ENCODE measurements at regions of chr10 and their contacts with region 1.

Region 1: GRCh38 chr10:132654702-132655661 is 117.4 kb downstream of the INPP5A start:
- DNase-seq: peak; percentile 72 to 84 (median 78)
- H3K4me3 ChIP-seq: peak overlapping the region in 1 of 59 donors; percentile 24
- H3K27ac ChIP-seq: peak overlapping the region in 53 of 59 donors; percentile 3 to 100 (median 66)
- H3K27me3 ChIP-seq: no peaks in the 10 kb centered on the region
- CTCF ChIP-seq: peak; percentile 77 to 99 (median 96)

Region 2: DNA sequence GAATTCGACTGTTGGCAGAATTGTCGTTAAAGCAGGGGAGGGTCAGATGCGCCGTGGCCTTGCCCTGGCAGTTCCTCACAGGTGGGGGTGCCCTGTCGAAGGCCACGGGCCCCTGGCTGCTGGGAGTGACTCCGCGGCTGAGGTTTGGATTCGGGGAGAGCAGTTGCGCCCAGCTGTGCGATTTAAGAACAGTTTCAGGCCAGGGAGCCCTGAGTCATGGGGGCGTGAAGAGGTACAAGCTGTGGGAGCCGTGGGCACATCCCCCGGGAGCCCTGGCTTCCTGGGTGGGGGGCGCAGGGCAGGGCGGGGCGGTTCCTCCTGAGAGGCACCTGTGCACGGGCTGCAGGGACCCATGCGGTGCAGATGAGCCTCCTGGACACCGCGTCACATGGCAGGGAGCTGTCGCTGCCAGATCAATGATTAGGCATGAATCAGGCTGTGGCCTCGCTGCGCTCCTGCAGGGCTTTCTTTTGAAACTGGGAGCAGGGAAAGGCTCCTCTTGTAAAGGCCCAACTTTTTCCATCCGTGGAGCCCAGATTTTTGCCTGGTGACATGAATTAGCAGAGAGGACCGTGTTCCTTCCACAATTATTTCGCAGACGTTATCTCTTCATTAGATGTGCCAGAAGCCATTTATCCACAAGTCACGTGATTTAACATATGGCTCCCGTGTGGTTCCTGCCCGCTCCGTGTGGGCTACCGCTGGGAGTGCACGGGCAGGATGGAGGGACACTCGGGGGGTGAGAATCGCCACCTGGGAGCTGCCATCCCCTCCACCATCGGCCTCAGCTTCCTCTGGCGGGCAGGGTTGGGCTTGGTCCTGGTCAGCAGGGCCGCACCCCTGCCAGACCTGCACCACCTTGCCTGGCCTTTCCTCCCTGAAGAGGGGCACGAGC is 257.1 kb before region 1 on chr10:
- intact Hi-C with region 1: no loop called
- DNase-seq: peak in 1 of 10 donors; percentile 51
- H3K4me3 ChIP-seq: peak overlapping the region; percentile 61 to 85 (median 72)
- H3K27ac ChIP-seq: peak overlapping the region in 57 of 59 donors; percentile 19 to 93 (median 71)
- H3K27me3 ChIP-seq: no peaks in the 10 kb centered on the region
- CTCF ChIP-seq: peak in 1 of 56 donors; percentile 9

Region 3: DNA sequence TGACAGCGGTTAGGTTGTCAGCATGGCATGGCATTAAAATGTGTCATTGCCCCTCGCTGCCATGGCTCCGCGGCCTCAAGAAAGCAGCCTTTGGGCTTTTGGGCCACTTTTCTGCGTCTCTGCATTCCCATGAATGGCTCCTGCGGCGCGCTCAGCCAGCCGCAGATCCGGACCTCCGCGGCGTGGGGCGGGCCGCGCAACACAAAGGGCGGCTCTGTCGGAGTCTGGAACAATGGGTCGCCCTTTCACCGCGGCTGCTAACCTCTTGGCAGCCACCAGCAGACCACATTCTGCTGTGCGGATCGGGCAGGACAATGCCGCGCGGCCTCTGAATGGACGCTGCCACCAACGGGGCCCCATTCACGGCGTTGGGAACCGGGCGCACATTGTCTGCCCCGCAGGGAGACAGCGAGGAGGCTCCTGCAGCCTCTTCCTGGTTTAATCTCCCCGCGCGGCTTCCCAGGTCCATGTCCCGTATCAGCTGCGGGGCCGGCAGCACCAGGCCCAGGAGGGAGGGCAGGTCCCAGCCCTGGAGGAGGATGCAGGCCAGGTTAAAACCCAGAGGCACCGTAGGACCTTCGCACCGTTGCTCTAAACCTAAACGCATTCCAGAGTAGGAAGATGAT is 59.2 kb after region 1 on chr10:
- intact Hi-C with region 1: loop called in 1 of 2 experiments (anchors 2 kb)
- DNase-seq: peak; percentile 41 to 93 (median 92)
- H3K4me3 ChIP-seq: peak overlapping the region in 40 of 59 donors; percentile 0 to 47 (median 28)
- H3K27ac ChIP-seq: peak overlapping the region; percentile 79 to 100 (median 96)
- H3K27me3 ChIP-seq: no peaks in the 10 kb centered on the region
- CTCF ChIP-seq: peak in 17 of 56 donors; percentile 8 to 35 (median 20)

Region 4: DNA sequence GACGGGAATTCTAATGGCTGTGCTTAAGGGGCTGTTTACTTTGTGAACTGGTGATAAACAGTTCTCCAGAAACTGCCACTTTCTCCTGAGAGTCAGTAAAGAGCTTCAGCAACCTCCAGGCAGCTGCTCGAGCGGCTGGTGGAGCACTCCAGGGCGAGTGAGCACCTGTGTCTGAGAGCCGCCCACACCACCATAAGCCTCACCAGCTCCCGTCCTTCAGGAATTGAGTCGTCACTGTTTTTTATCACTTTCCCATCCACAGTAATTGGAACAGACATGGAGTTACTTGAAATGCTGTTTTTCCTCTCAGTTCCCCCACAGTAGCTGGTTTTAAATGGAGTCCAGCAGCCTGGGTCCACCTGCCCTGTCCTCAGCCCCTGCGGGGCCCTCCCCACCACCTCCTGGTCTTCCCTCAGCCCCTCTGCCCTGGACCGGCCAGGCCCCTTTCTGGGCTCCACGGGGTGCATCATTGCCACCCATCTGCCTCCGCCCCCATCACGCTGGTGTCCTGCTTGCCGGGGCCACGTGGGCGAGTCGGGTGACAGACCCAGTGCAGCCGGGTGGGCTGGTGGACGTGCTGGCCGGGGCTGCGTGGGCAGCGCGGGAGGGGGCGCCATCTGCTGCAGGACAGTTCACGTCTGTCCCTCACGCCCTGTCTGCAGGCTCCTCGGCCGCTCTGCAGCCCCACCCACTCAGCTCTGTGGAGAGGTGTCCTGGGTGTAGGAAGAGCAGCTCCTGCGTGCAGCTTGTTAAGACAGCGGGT is 75.0 kb after region 1 on chr10:
- intact Hi-C with region 1: loop called (anchors 5 kb)
- DNase-seq: peak in 2 of 10 donors; percentile 32 to 72
- H3K4me3 ChIP-seq: peak overlapping the region in 1 of 59 donors; percentile 5
- H3K27ac ChIP-seq: peak overlapping the region in 2 of 59 donors; percentile 38 to 39
- H3K27me3 ChIP-seq: no peaks in the 10 kb centered on the region
- CTCF ChIP-seq: no peak

Region 5: DNA sequence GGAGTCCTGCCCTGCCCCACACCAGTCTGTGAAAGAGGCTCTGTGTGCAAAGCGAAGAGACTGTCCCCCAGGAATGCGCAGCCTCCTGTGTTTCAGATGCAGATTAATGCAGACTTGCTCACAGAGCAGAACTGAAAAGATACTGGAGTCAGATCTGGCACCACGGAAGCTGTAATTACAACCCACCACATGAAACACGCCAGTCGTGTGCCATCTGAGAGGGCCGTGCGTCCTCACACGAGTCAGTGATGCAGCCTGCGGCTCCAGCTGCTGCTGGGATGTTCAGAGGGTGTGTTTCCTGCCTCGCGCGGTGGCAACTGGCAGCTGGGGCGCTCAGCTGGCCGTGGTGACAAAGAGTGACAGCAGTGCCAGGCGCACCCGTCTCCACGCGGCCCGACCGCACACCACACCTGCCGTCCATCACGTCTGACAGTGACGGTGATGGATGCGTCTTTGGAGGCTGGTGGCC is 81.0 kb after region 1 on chr10:
- intact Hi-C with region 1: loop called in 1 of 2 experiments (anchors 2 kb)
- DNase-seq: peak; percentile 14 to 93 (median 90)
- H3K4me3 ChIP-seq: peak overlapping the region in 22 of 59 donors; percentile 8 to 50 (median 29)
- H3K27ac ChIP-seq: peak overlapping the region; percentile 81 to 100 (median 99)
- H3K27me3 ChIP-seq: no peaks in the 10 kb centered on the region
- CTCF ChIP-seq: peak in 1 of 56 donors; percentile 6

Region 6: GRCh38 chr10:132788180-132788830 is 133.3 kb after region 1 on chr10:
- intact Hi-C with region 1: loop called (anchors 2 kb)
- DNase-seq: peak in 6 of 10 donors; percentile 52 to 79 (median 59)
- H3K4me3 ChIP-seq: peak overlapping the region in 58 of 59 donors; percentile 7 to 70 (median 53)
- H3K27ac ChIP-seq: peak overlapping the region in 50 of 59 donors; percentile 22 to 92 (median 84)
- H3K27me3 ChIP-seq: peaks cover 0 to 61% (median 46%) of the 10 kb centered on the region in 45 donors
- CTCF ChIP-seq: peak in 54 of 56 donors; percentile 13 to 75 (median 48)

Region 7: GRCh38 chr10:132836832-132837540 is 182.0 kb after region 1 on chr10:
- intact Hi-C with region 1: loop called (anchors 5 kb)
- DNase-seq: peak in 6 of 10 donors; percentile 35 to 75 (median 62)
- H3K4me3 ChIP-seq: peak overlapping the region in 30 of 59 donors; percentile 0 to 49 (median 29)
- H3K27ac ChIP-seq: peak overlapping the region in 4 of 59 donors; percentile 8 to 57 (median 26)
- H3K27me3 ChIP-seq: peaks cover 0 to 3% (median 0%) of the 10 kb centered on the region in 45 donors
- CTCF ChIP-seq: peak; percentile 79 to 100 (median 97)

Measured in dorsolateral prefrontal cortex (tissue), 120 donors.